ENCODE measurements at regions of chrX and their contacts with region 1.

Region 1: GRCh38 chrX:77899081-77899828 is at the start of gene COX7B:
- DNase-seq: peak; percentile 71
- ATAC-seq: peak; percentile 70
- H3K4me3 Mint-ChIP-seq: peak within 1 kb of the TSS; percentile 96
- H3K27ac Mint-ChIP-seq: peak within 1 kb of the TSS; percentile 97
- H3K4me1 Mint-ChIP-seq: peaks cover 20% of the 10 kb centered on the region
- H3K27me3 Mint-ChIP-seq: no peaks in the 10 kb centered on the region
- total RNA-seq, gene COX7B: 303 to 375 TPM

Region 2: GRCh38 chrX:76427560-76428242 is 1471.6 kb before region 1 on chrX and contains the start of gene MAGEE1:
- CTCF ChIA-PET with region 1: no interaction called
- POLR2A ChIA-PET with region 1: no interaction called
- intact Hi-C with region 1: loop called in 1 of 2 experiments (anchors 10 kb)
- DNase-seq: peak; percentile 86
- ATAC-seq: peak; percentile 83
- H3K4me3 Mint-ChIP-seq: peak within 1 kb of the TSS; percentile 79
- H3K27ac Mint-ChIP-seq: peak within 1 kb of the TSS; percentile 76
- H3K4me1 Mint-ChIP-seq: peaks cover 32% of the 10 kb centered on the region
- H3K27me3 Mint-ChIP-seq: no peaks in the 10 kb centered on the region
- total RNA-seq, gene MAGEE1: 3.8 to 4.0 TPM

Region 3: DNA sequence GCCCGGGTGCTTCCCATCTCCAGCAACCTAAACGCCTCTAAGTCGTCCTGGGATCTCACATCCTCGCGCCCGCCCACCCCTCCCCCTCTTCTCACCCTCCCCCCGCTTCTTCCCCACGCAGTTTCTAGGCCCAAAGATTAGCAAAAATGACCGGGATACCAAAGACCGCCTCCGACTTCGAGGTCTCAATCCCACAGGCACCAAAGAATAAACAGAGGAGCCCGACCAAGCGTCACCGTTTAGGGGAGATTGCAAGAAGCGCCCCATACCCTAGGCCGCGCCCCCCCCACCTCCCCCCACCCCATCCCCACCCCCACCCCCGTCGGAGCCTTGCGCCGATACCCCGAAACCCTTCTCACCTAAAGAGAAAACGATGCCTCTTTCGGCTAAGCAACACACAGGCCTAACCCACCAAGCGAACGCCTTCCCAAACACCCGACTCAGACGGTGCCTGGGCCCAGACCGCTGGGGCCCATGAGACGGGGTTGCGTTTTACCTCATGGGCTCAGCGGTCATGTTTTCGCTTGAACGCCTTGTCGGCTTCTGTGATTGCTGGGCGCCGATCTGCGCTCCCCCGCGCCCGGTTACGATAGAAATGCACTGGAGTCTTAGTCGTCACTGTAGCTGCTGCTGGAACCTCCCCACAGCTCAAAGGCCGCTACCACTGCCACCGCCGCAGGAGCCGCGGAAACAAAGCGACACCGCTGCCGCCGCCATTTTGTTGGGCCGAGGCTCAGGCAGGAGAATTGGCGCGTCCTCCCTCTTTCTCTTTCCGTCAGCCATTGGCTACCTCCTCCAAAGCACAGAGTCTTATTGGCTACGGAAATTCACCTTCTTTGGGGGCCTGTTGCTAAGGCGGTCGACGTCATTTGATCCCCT is 113.5 kb before region 1 on chrX and contains the start of gene ATRX:
- CTCF ChIA-PET with region 1: interaction called, 3 read pairs
- POLR2A ChIA-PET with region 1: interaction called, 4 read pairs
- intact Hi-C with region 1: loop called (anchors 1 kb)
- DNase-seq: peak; percentile 84
- ATAC-seq: peak; percentile 91
- H3K4me3 Mint-ChIP-seq: peak within 1 kb of the TSS; percentile 91
- H3K27ac Mint-ChIP-seq: peak within 1 kb of the TSS; percentile 100
- H3K4me1 Mint-ChIP-seq: peaks cover 26% of the 10 kb centered on the region
- H3K27me3 Mint-ChIP-seq: no peaks in the 10 kb centered on the region
- total RNA-seq, gene ATRX: 52.1 to 70.6 TPM

Region 4: DNA sequence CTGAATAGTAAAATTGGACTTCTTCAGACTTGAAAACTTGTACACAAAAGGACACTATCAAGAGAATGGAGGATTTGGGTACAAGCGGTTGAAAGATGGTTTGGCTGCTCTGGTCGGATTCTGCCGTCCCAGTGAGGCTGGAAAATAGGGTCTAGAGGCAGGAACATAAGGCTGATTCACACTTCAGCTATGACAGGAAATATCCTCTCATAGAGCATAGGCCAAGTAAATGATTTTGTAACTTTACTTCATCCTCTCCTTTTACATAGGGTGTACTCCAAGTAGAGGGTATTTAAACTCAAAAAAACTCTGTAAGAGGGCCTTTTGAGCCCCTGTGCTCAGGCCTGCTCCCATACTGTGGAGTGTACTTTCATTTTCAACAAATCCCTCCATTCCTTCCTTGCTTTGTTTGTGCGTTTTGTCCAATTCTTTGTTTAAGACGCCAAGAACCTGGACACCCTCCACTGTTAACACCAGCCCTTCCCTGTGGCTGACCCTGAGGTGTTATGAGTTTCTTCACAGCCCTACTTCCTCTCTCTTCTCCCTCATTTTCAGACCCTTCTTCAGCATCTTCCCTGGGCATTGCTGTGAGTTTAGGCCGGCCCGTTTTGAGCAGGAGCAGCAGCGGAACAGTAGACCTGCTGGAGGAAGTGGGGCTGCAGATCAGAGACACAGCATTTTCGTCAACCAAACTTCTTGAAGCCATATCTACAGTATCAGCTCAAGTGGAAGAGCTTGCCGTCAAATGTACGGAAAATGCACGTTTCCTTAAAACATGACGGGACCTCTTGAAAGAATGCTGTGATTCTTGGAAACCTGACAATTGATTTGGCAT is 63.0 kb after region 1 on chrX:
- CTCF ChIA-PET with region 1: interaction called, 3 read pairs
- POLR2A ChIA-PET with region 1: interaction called, 5 read pairs
- intact Hi-C with region 1: loop called in 1 of 2 experiments (anchors 5 kb)
- DNase-seq: peak; percentile 16
- ATAC-seq: peak; percentile 54
- H3K4me3 Mint-ChIP-seq: peak overlapping the region; percentile 68
- H3K27ac Mint-ChIP-seq: peak overlapping the region; percentile 92
- H3K4me1 Mint-ChIP-seq: peaks cover 47% of the 10 kb centered on the region
- H3K27me3 Mint-ChIP-seq: no peaks in the 10 kb centered on the region

Region 5: GRCh38 chrX:79161655-79162054 is 1262.4 kb after region 1 on chrX:
- CTCF ChIA-PET with region 1: no interaction called
- POLR2A ChIA-PET with region 1: no interaction called
- intact Hi-C with region 1: loop called in 1 of 2 experiments (anchors 10 kb)
- DNase-seq: peak; percentile 50
- ATAC-seq: peak; percentile 77
- H3K4me3 Mint-ChIP-seq: peak overlapping the region; percentile 75
- H3K27ac Mint-ChIP-seq: peak overlapping the region; percentile 93
- H3K4me1 Mint-ChIP-seq: peaks cover 62% of the 10 kb centered on the region
- H3K27me3 Mint-ChIP-seq: no peaks in the 10 kb centered on the region

Measured in activated CD4-positive, alpha-beta T cell treated with anti-CD3 and anti-CD28 coated beads for 36 hours (primary cell).